Activated CD4-positive, alpha-beta T cell treated with anti-CD3 and anti-CD28 coated beads for 36 hours (primary cell): ENCODE measurements at regions of chr2 and their contacts with region 1.

Region 1: DNA sequence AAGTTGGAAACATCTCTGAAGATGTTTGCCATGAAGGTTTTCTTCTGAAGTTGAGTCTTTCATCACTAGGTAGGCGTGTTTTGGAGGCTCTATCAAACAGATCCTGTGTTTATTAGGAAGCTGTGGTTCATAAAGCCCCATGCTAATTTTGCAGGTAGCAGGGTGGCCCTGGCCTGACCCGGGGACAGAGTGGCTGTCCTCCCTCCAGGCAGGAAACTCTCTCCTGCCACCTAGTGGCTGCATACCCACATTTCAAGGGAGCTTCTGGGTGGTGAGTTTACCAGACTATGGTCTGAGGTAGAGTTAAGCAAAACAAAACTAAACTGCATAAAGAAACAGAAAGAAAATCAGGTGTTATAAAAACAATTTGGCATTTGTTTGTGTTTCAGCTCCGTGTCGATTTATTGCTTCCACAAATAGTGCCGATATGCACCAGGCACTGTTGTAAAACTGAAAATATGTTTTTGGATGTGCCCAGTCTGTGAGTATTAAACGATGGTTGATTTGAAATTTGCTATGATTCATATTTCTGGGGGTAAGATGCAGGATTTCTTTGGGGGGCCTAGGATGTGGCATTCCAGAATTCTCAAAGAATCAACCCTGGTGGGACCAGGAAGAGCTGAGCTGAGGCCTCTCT is 26.0 kb upstream of the IL37 start:
- DNase-seq: peak; percentile 85
- ATAC-seq: peak; percentile 87
- H3K4me3 Mint-ChIP-seq: no peak overlapping the region
- H3K27ac Mint-ChIP-seq: peak overlapping the region; percentile 1
- H3K4me1 Mint-ChIP-seq: peaks cover 23% of the 10 kb centered on the region
- H3K27me3 Mint-ChIP-seq: no peaks in the 10 kb centered on the region

Region 2: GRCh38 chr2:112606488-112606902 is 278.5 kb before region 1 on chr2:
- CTCF ChIA-PET with region 1: interaction called, 3 read pairs
- POLR2A ChIA-PET with region 1: no interaction called
- intact Hi-C with region 1: loop called (anchors 5 to 10 kb)
- DNase-seq: no peak
- ATAC-seq: no peak
- H3K4me3 Mint-ChIP-seq: no peak overlapping the region
- H3K27ac Mint-ChIP-seq: no peak overlapping the region
- H3K4me1 Mint-ChIP-seq: no peaks in the 10 kb centered on the region
- H3K27me3 Mint-ChIP-seq: no peaks in the 10 kb centered on the region

Region 3: GRCh38 chr2:112737542-112738232 is 147.3 kb before region 1 on chr2:
- CTCF ChIA-PET with region 1: interaction called, 14 read pairs
- POLR2A ChIA-PET with region 1: no interaction called
- intact Hi-C with region 1: no loop called
- DNase-seq: no peak
- ATAC-seq: no peak
- H3K4me3 Mint-ChIP-seq: no peak overlapping the region
- H3K27ac Mint-ChIP-seq: no peak overlapping the region
- H3K4me1 Mint-ChIP-seq: peaks cover 4% of the 10 kb centered on the region
- H3K27me3 Mint-ChIP-seq: no peaks in the 10 kb centered on the region

Region 4: GRCh38 chr2:112784199-112785189 is 100.5 kb before region 1 on chr2 and contains the start of gene IL1A:
- CTCF ChIA-PET with region 1: interaction called, 11 read pairs
- POLR2A ChIA-PET with region 1: no interaction called
- intact Hi-C with region 1: no loop called
- DNase-seq: peak; percentile 28
- ATAC-seq: peak; percentile 71
- H3K4me3 Mint-ChIP-seq: peak within 1 kb of the TSS; percentile 22
- H3K27ac Mint-ChIP-seq: no peak within 1 kb of the TSS
- H3K4me1 Mint-ChIP-seq: peaks cover 3% of the 10 kb centered on the region
- H3K27me3 Mint-ChIP-seq: peaks cover 8% of the 10 kb centered on the region
- total RNA-seq, gene IL1A: 6.6 to 6.9 TPM

Region 5: DNA sequence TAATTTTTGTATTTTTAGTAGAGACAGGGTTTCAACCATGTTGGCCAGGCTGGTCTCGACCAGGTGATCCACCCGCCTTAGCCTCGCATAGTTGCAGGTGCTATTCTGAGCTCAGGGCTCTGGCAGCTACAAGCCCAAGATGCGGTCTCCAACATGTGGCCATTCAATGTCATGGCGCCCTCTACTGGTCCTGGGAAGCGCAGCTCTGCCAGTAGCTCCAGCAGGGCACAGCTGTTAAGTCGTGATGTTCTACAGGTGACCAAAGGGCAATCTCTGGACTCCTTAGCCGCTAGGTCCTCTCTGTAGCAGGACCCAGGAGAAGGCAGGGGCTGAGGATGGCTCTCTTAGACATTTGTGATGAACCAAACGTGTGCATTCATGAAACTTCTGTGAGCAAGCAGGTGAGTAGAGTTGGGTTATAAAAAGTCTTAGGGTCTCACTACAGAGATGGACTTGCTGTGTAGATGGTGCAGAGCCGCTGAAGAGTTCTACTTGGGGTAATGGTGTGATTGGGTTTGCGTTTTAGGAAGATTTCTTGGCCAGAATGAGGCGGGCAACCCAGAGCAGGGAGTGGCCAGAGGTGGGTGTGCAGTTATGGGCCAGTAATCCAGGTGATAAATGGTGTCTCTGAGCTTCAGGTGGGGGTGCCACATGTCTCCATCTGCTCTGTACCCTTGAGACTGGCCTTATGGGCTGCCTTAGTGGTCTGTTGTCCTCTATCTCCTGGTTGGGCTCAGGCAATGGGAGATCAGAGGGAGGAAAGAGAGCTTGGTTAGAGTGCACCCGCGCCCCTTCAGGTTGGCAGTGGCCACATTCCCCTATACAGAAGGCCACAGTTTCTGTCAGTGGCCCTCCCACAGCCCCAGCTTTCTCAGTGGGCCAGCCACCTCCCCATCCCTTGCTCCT is 57.0 kb after region 1 on chr2:
- CTCF ChIA-PET with region 1: interaction called, 35 read pairs
- POLR2A ChIA-PET with region 1: no interaction called
- intact Hi-C with region 1: loop called (anchors 1 to 2 kb)
- DNase-seq: peak; percentile 89
- ATAC-seq: peak; percentile 96
- H3K4me3 Mint-ChIP-seq: no peak overlapping the region
- H3K27ac Mint-ChIP-seq: no peak overlapping the region
- H3K4me1 Mint-ChIP-seq: no peaks in the 10 kb centered on the region
- H3K27me3 Mint-ChIP-seq: no peaks in the 10 kb centered on the region